H1 (cell line): ENCODE measurements at regions of chr15 and their contacts with region 1.

Region 1: GRCh38 chr15:51982013-51982769 is 10.6 kb upstream of the LEO1 start:
- DNase-seq: no peak
- H3K4me3 ChIP-seq: no peak overlapping the region
- H3K27ac ChIP-seq: no peak overlapping the region
- H3K4me1 ChIP-seq: no peaks in the 10 kb centered on the region
- H3K27me3 ChIP-seq: no peaks in the 10 kb centered on the region
- CTCF ChIP-seq: peak in 2 of 3 experiments; percentile 21 to 47; a peak in 2 of 4 replicates
- EP300 ChIP-seq: no peak
- POLR2A ChIP-seq: no peak
- RAD21 ChIP-seq: peak; percentile 66 to 74

Region 2: GRCh38 chr15:51622604-51623370 is 359.4 kb before region 1 on chr15 and contains the start of gene DMXL2:
- CTCF ChIA-PET with region 1: no interaction called
- POLR2A ChIA-PET with region 1: no interaction called
- DNase-seq: peak; percentile 66 to 94
- H3K4me3 ChIP-seq: peak within 1 kb of the TSS; percentile 92 to 99 (median 96)
- H3K27ac ChIP-seq: no peak within 1 kb of the TSS
- H3K4me1 ChIP-seq: peaks cover 0 to 5% (median 4%) of the 10 kb centered on the region in 4 experiments; a peak in 4 of 7 replicates
- H3K27me3 ChIP-seq: peaks cover 0 to 10% (median 4%) of the 10 kb centered on the region in 4 experiments; a peak in 5 of 7 replicates
- CTCF ChIP-seq: no peak
- EP300 ChIP-seq: no peak; a peak in 1 of 3 replicates
- POLR2A ChIP-seq: no peak; a peak in 1 of 3 replicates
- RAD21 ChIP-seq: no peak; a peak in 1 of 4 replicates
- total RNA-seq, gene DMXL2: 10.6 and 11.4 TPM in 2 replicates

Region 3: DNA sequence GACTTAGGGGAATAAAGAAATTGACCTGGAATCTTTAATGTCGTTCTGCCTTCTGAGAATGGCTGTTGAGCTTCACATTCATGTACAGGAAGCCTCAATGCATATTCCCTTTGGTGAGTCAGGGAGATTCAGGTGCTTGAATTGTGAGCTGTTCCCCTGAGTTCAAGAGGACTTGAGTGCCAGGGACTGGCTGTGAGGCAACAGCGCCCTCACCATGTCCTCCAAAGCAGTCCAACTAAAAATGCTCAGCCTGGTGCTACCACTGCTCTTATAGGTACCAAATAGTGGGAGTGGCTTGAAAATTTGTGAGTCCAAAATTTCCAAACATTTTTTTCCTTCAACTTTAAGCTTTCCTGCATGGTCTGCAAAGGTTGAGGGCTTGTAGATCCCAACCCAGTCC is 64.7 kb before region 1 on chr15:
- CTCF ChIA-PET with region 1: no interaction called
- POLR2A ChIA-PET with region 1: no interaction called
- DNase-seq: peak in 1 of 2 experiments; percentile 31
- H3K4me3 ChIP-seq: no peak overlapping the region
- H3K27ac ChIP-seq: no peak overlapping the region
- H3K4me1 ChIP-seq: no peaks in the 10 kb centered on the region; a peak in 1 of 7 replicates
- H3K27me3 ChIP-seq: no peaks in the 10 kb centered on the region
- CTCF ChIP-seq: peak; percentile 75 to 84 (median 78)
- EP300 ChIP-seq: no peak
- POLR2A ChIP-seq: no peak
- RAD21 ChIP-seq: peak; percentile 81 to 87

Region 4: GRCh38 chr15:51971375-51972133 is 10.6 kb before region 1 on chr15 and contains the start of gene LEO1:
- CTCF ChIA-PET with region 1: interaction called, 3 read pairs
- POLR2A ChIA-PET with region 1: interaction called, 15 read pairs
- DNase-seq: peak; percentile 81 to 83
- H3K4me3 ChIP-seq: peak within 1 kb of the TSS; percentile 92 to 100 (median 100)
- H3K27ac ChIP-seq: peak within 1 kb of the TSS; percentile 97
- H3K4me1 ChIP-seq: no peaks in the 10 kb centered on the region; a peak in 1 of 7 replicates
- H3K27me3 ChIP-seq: no peaks in the 10 kb centered on the region
- CTCF ChIP-seq: peak in 2 of 3 experiments; percentile 23 to 27; a peak in 2 of 4 replicates
- EP300 ChIP-seq: no peak
- POLR2A ChIP-seq: peak; percentile 74 to 86
- RAD21 ChIP-seq: no peak
- total RNA-seq, gene LEO1: 27.4 and 29.2 TPM in 2 replicates

Region 5: GRCh38 chr15:52039925-52040781 is 58.0 kb after region 1 on chr15:
- CTCF ChIA-PET with region 1: no interaction called
- POLR2A ChIA-PET with region 1: no interaction called
- DNase-seq: no peak
- H3K4me3 ChIP-seq: no peak overlapping the region
- H3K27ac ChIP-seq: 0 out of 2 replicates have a peak overlapping the region, but pooled peaks have one; percentile 16
- H3K4me1 ChIP-seq: peaks cover 0 to 10% (median 6%) of the 10 kb centered on the region in 4 experiments; a peak in 5 of 7 replicates
- H3K27me3 ChIP-seq: no peaks in the 10 kb centered on the region
- CTCF ChIP-seq: no peak
- EP300 ChIP-seq: no peak
- POLR2A ChIP-seq: no peak
- RAD21 ChIP-seq: no peak

Region 6: GRCh38 chr15:52071546-52071945 is 89.4 kb after region 1 on chr15:
- CTCF ChIA-PET with region 1: interaction called, 25 read pairs
- POLR2A ChIA-PET with region 1: no interaction called
- DNase-seq: no peak
- H3K4me3 ChIP-seq: no peak overlapping the region
- H3K27ac ChIP-seq: no peak overlapping the region
- H3K4me1 ChIP-seq: peaks cover 0 to 2% (median 0%) of the 10 kb centered on the region in 4 experiments; a peak in 1 of 7 replicates
- H3K27me3 ChIP-seq: no peaks in the 10 kb centered on the region
- CTCF ChIP-seq: no peak
- EP300 ChIP-seq: no peak
- POLR2A ChIP-seq: no peak
- RAD21 ChIP-seq: no peak